IMR-90 (cell line): ENCODE measurements at regions of chr12 and their contacts with region 1.

Region 1: DNA sequence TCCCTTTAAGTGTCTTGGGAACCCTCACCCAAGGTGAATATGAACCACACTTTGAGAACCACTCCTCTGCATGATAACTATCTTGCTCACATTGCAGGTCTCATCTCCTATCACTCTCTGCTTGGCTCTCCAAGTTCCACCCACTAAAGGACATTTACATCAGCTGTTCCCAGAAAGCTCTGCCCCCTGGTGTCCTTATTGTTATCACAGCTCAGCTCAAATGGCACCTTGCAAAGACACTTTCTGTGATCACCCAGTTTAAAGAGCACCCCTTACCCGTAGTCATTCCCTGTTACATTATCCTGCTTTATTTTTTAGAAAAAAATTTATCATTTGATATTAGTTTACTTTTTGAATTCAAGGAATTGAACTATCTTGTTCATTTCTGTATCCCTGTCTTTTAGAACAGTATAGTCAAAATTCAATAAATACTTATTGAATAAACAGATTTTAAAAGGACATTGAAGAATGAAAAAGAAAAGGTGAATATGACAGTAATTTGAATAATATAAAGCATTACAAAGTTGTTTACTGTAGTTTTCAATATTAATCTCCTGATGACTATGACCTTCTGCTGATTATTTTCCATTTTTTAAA is 20.5 kb upstream of the GUCY2C start:
- DNase-seq: peak; percentile 37
- ATAC-seq: peak; percentile 77
- H3K4me3 ChIP-seq: no peak overlapping the region
- H3K27ac ChIP-seq: no peak overlapping the region
- H3K4me1 ChIP-seq: no peaks in the 10 kb centered on the region
- H3K27me3 ChIP-seq: peaks cover 2% of the 10 kb centered on the region; the same call in 1 of the 2 replicates
- CTCF ChIP-seq: peak; percentile 51
- POLR2A ChIP-seq: no peak
- RAD21 ChIP-seq: peak; percentile 42

Region 2: GRCh38 chr12:14554281-14555007 is 162.5 kb before region 1 on chr12:
- CTCF ChIA-PET with region 1: no interaction called
- POLR2A ChIA-PET with region 1: no interaction called
- dilution Hi-C with region 1: no loop called
- in situ Hi-C with region 1: no loop called
- intact Hi-C with region 1: no loop called
- DNase-seq: no peak
- ATAC-seq: no peak
- H3K4me3 ChIP-seq: no peak overlapping the region
- H3K27ac ChIP-seq: no peak overlapping the region
- H3K4me1 ChIP-seq: no peaks in the 10 kb centered on the region
- H3K27me3 ChIP-seq: no peaks in the 10 kb centered on the region
- CTCF ChIP-seq: no peak
- POLR2A ChIP-seq: no peak
- RAD21 ChIP-seq: no peak

Region 3: DNA sequence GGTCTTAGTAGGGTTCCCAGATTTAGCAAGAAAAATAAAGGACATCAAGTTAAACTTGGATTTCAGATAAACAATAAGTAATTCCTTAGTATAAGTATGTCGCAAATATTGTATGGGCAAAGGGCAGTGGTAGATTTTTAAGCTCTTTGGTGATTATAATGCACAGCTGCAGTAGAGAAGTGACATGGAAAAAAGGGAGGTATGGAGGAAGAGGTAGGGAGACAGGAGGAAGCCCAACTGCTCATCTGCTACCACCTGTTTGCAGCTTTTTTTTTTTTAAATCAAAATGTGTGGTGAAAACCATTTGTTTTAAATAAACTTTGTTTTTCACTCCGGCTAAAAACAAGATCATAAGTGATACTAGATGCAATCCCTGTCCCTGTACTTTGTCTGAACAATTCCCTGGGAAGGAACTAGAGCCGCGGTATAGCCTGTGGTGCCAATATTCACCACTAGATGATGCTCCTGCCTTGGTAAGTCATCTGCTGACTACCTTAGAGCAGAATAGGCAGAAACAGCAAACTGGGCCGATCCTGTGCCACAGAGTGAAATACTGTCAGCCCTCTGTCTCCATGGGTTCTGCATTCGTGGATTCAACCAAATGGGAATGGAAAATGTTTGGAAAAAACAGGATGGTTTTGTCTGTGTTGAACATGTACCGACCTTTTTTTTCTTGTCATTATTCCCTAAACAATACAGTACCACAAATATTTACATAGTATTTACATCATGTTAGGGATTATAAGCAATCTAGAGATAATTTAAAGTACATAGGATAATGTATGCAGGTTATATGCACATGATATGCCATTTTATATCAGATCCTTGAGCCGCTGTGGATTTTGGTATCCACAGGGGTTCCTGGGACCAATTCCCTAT is 86.9 kb before region 1 on chr12:
- CTCF ChIA-PET with region 1: no interaction called
- POLR2A ChIA-PET with region 1: no interaction called
- dilution Hi-C with region 1: no loop called
- in situ Hi-C with region 1: no loop called
- intact Hi-C with region 1: loop called (anchors 1 kb)
- DNase-seq: peak; percentile 62
- ATAC-seq: peak; percentile 100
- H3K4me3 ChIP-seq: no peak overlapping the region
- H3K27ac ChIP-seq: no peak overlapping the region
- H3K4me1 ChIP-seq: no peaks in the 10 kb centered on the region
- H3K27me3 ChIP-seq: no peaks in the 10 kb centered on the region
- CTCF ChIP-seq: peak; percentile 92
- POLR2A ChIP-seq: no peak
- RAD21 ChIP-seq: peak; percentile 88